Activated CD4-positive, alpha-beta T cell treated with anti-CD3 and anti-CD28 coated beads, Interleukin-2, amount 10 ng/mL, durations not matched to agents 24 days and 14 days (primary cell): ENCODE measurements at regions of chr6 and their contacts with region 1.

Region 1: GRCh38 chr6:167350731-167351655 is 26.1 kb downstream of the TTLL2 start:
- DNase-seq: peak; percentile 95
- H3K4me3 Mint-ChIP-seq: peak overlapping the region; percentile 80
- H3K27ac Mint-ChIP-seq: peak overlapping the region; percentile 87
- H3K4me1 Mint-ChIP-seq: peaks cover 18% of the 10 kb centered on the region
- H3K27me3 Mint-ChIP-seq: peaks cover 40% of the 10 kb centered on the region

Region 2: DNA sequence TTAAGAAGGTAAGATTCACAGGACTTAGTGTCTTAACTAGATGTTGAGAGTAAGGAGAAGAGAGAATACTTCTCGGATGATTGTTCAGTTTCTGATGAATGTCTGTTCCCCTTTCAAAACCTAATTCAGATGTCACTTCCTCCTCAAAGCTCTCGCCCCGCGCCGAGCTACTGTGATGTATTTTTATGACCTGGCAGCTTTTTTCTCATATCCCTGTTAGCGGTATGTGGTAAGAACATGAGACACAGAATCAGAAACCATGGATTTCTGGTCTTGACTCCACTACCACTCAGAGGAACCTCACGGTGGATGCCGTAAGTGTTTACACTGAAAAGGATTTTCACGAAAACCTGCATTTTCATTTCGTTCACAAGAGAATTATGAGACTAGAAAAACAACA is 303.4 kb before region 1 on chr6:
- intact Hi-C with region 1: loop called (anchors 5 kb)
- DNase-seq: peak; percentile 81
- H3K4me3 Mint-ChIP-seq: peak overlapping the region; percentile 35
- H3K27ac Mint-ChIP-seq: peak overlapping the region; percentile 74
- H3K4me1 Mint-ChIP-seq: peaks cover 21% of the 10 kb centered on the region
- H3K27me3 Mint-ChIP-seq: no peaks in the 10 kb centered on the region

Region 3: DNA sequence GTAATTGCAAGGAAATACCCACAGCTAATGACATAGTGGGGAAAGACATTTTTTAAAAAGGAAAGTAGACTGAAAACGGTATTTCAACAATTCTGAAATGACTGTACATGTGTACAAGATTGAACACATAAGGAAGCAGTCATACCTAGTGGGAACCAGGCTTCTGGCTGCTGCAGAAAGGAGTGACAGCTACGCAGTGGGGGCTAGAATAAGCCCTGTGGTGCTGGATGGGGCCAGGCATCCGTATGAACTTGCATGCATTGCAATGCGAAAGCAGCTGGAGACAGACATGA is 138.3 kb before region 1 on chr6:
- intact Hi-C with region 1: loop called (anchors 10 kb)
- DNase-seq: no peak
- H3K4me3 Mint-ChIP-seq: no peak overlapping the region
- H3K27ac Mint-ChIP-seq: no peak overlapping the region
- H3K4me1 Mint-ChIP-seq: peaks cover 3% of the 10 kb centered on the region
- H3K27me3 Mint-ChIP-seq: peaks cover 2% of the 10 kb centered on the region

Region 4: GRCh38 chr6:167285077-167285770 is 65.8 kb before region 1 on chr6:
- intact Hi-C with region 1: no loop called
- DNase-seq: no peak
- H3K4me3 Mint-ChIP-seq: no peak overlapping the region
- H3K27ac Mint-ChIP-seq: no peak overlapping the region
- H3K4me1 Mint-ChIP-seq: no peaks in the 10 kb centered on the region
- H3K27me3 Mint-ChIP-seq: peaks cover 9% of the 10 kb centered on the region

Region 5: DNA sequence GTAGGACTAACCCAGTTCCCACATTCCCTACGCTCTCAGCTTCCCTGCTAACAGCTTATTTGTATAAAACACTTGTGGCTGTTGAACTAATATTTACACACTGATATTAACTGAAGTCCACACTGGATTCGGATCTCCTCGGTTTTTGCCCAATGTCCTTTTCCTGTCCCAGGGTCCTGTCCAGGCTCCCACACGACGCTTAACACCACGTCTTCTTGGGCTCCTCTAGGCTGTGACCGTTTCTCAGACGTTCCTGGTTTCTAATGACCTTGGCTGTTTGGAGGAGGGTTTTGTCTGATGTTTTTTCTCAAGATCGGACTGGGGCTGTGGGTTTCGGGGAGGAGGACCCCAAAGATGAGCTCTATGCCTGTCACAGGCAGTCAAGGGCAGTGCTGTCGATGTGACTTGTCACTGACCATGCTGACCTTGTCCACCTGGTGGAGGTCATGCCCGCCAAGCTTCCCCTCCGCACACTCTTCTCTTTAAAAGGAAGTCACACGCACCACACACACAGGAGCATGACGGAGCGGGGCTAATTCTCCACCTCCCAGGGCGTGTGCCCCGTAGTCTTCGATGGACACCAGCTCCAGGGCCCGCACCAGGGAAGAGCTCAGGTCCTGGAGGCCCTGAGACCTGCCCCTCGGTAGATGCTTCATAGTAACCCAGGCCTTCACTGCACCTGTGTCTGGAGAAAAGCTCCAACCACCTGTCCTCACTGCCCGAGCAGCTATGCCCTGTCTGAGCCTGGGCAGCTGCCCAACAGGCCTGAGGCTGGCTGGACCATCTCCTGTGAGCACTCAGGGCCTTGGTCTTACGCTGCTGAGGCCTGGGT is 45.9 kb after region 1 on chr6:
- intact Hi-C with region 1: no loop called
- DNase-seq: peak; percentile 32
- H3K4me3 Mint-ChIP-seq: no peak overlapping the region
- H3K27ac Mint-ChIP-seq: no peak overlapping the region
- H3K4me1 Mint-ChIP-seq: no peaks in the 10 kb centered on the region
- H3K27me3 Mint-ChIP-seq: peaks cover 1% of the 10 kb centered on the region